ENCODE measurements at regions of chr20 and their contacts with region 1.

Region 1: DNA sequence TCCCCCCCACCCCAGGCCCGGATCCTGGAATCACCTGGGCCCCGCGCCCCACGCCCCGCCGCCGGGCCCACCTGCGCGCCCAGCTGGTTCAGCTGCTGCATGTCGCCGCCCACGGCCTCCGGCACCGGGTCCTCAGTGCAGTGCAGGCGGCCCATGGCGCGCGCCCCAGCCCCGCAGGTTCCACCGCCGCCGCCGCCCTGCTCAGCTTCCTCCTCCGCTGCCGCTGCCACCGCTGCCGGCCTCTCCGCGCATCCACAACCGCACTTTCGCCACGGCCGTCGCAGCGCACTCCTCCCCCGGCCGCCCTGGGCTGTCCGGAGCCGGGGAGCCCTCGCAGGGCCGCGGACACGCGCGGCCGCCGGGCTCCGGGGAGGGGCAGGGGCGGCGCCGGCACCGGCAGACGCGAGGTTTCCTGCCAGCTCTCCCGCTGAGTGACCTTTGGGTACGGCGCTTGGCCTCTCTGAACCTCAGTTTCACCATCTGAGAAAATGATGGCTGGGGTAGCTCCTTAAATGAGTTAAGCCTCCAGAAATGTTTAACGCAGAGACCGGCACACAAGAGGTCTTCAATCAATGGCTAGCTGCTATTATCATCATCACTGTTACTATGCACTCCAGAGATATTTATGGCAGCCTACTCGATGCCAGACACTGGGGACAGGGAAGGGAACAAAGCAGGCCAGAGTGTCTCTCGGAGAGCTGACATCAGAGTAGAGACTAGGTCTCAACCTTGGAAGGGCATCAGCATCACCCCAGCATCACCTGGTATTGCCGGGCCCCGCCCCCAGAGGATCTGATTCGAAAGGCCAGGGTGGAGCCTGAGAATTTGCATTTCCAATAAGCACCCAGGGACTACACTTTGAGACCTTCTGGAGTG is at the start of gene COMMD7:
- DNase-seq: peak; percentile 36 to 75 (median 61)
- ATAC-seq: peak; percentile 81 to 89
- H3K4me3 Mint-ChIP-seq: peak within 1 kb of the TSS; percentile 92 to 99 (median 95)
- H3K27ac Mint-ChIP-seq: peak within 1 kb of the TSS; percentile 71 to 99 (median 98)
- H3K4me1 Mint-ChIP-seq: peaks cover 12 to 48% (median 30%) of the 10 kb centered on the region in 4 donors
- H3K27me3 Mint-ChIP-seq: peaks cover 0 to 1% (median 0%) of the 10 kb centered on the region in 5 donors
- polyA plus RNA-seq, gene COMMD7: 120 to 138 (median 123) TPM

Region 2: GRCh38 chr20:32762149-32762753 is 18.8 kb after region 1 on chr20 and contains the start of gene DNMT3B:
- POLR2A ChIA-PET with region 1: interaction called, 29 read pairs
- DNase-seq: peak; percentile 56 to 81 (median 66)
- ATAC-seq: peak; percentile 75 to 78
- H3K4me3 Mint-ChIP-seq: peak within 1 kb of the TSS; percentile 83 to 94 (median 88)
- H3K27ac Mint-ChIP-seq: peak within 1 kb of the TSS; percentile 17 to 85 (median 76)
- H3K4me1 Mint-ChIP-seq: peaks cover 11 to 24% (median 18%) of the 10 kb centered on the region in 4 donors
- H3K27me3 Mint-ChIP-seq: no peaks in the 10 kb centered on the region
- polyA plus RNA-seq, gene DNMT3B: 0.08 to 0.65 TPM in 2 of 3 donors, not detected in the other

Measured in naive thymus-derived CD8-positive, alpha-beta T cell (primary cell).